CD4-positive, alpha-beta memory T cell (primary cell): ENCODE measurements at regions of chr14 and their contacts with region 1.

Region 1: DNA sequence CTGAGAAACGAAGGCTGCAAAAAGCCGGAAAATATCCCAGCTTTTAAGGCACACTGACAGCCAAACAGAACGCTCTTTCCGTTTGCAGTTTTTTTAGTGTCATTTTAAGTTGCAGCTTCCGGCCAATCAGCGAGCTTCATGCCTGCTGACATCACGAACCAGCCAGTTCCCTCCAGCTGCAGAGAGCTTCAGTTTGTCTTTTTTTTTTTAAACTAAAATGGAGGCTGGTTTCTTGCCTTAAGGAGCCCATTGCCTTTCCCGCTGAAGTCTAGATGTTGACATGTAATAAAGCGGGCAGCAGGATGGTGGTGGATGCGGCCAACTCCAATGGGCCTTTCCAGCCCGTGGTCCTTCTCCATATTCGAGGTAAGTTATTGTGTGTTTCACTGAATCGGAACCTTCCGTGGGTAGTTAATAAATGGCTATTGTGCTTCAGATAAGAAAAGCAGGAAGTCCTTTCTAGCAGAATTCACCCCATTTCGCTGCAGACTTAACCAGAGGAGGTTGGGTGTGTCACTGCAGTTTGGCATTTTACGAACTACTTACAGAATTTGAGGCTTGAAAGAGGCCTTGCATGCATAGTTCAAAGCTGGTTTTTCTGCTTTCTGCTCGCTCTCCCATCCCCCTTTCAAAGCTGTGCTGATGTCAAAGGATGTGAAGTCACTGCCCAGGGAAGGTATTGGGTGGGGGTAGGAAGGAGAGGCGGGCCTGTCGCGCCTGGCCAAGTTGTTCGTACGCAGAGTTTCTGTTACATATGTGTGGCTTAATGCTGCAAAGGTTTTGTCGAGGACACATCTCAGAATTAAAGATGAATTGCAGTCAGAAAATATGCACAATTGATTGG is 48.4 kb downstream of the PPP2R5C start:
- DNase-seq: peak; percentile 91 to 97 (median 95)
- H3K4me3 ChIP-seq: peak overlapping the region; percentile 85 to 97
- H3K4me3 Mint-ChIP-seq: peak overlapping the region; percentile 90 to 97 (median 95)
- H3K27ac ChIP-seq: peak overlapping the region; percentile 98
- H3K27ac Mint-ChIP-seq: peak overlapping the region; percentile 97 to 100 (median 99)
- H3K4me1 ChIP-seq: peaks cover 46% of the 10 kb centered on the region
- H3K4me1 Mint-ChIP-seq: peaks cover 31 to 62% (median 46%) of the 10 kb centered on the region in 4 donors
- H3K27me3 ChIP-seq: no peaks in the 10 kb centered on the region
- H3K27me3 Mint-ChIP-seq: no peaks in the 10 kb centered on the region

Region 2: GRCh38 chr14:101695659-101696058 is 114.2 kb before region 1 on chr14:
- CTCF ChIA-PET with region 1: no interaction called
- POLR2A ChIA-PET with region 1: no interaction called
- intact Hi-C with region 1: no loop called
- DNase-seq: no peak
- H3K4me3 ChIP-seq: no peak overlapping the region
- H3K4me3 Mint-ChIP-seq: no peak overlapping the region
- H3K27ac ChIP-seq: no peak overlapping the region
- H3K27ac Mint-ChIP-seq: no peak overlapping the region
- H3K4me1 ChIP-seq: no peaks in the 10 kb centered on the region
- H3K4me1 Mint-ChIP-seq: no peaks in the 10 kb centered on the region
- H3K27me3 ChIP-seq: no peaks in the 10 kb centered on the region
- H3K27me3 Mint-ChIP-seq: peaks cover 1 to 9% of the 10 kb centered on the region in 2 donors

Region 3: DNA sequence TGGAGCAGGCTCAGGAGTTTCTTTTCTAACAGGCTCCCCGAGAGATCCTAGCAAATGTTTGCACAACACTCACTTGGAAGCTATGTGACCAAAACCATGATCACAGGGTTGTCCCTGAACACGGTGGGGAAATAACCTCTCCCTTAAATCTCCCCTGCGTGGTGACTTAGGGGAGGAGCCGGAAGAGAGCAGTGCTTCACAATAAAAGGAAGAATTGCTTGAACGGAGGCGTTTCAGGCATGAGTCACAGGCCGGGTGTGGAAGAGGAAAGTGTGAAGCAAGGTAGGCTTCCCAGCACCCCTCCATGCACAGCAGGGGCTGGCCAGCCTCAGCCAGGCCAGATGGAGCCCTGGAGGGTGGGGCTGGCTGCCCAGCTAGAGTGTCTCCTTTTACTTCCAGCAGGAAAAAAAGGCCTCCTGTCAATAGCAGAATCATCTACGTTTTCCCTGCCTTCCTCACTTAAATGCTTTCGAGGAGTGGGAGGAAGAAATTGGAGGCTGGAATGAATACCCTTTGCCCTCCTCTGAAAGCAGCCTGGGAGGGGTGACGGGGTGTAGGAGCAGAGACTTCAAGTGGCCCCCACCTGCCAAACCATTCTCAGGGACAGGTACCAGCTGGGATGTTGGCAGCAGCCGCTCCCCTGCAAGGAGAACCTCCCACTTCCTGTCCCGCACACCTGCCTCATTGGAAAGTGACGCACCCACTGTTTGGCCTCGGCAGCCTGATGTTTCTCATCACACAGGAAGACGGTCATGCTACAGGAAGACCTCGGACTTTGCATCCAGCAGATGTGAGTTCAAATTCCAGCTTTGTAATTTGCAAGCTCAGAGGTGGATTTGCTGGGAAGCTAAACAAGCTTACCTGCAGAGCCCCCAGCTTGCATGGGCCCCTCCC is 78.5 kb before region 1 on chr14:
- CTCF ChIA-PET with region 1: no interaction called
- POLR2A ChIA-PET with region 1: interaction called, 18 read pairs
- intact Hi-C with region 1: no loop called
- DNase-seq: peak; percentile 83 to 96 (median 83)
- H3K4me3 ChIP-seq: peak overlapping the region; percentile 31 to 58
- H3K4me3 Mint-ChIP-seq: peak overlapping the region; percentile 68 to 86 (median 82)
- H3K27ac ChIP-seq: peak overlapping the region; percentile 75
- H3K27ac Mint-ChIP-seq: peak overlapping the region; percentile 85 to 100 (median 99)
- H3K4me1 ChIP-seq: peaks cover 35% of the 10 kb centered on the region
- H3K4me1 Mint-ChIP-seq: peaks cover 29 to 52% (median 42%) of the 10 kb centered on the region in 4 donors
- H3K27me3 ChIP-seq: no peaks in the 10 kb centered on the region
- H3K27me3 Mint-ChIP-seq: no peaks in the 10 kb centered on the region

Region 4: GRCh38 chr14:101781240-101782061 is 28.4 kb before region 1 on chr14:
- CTCF ChIA-PET with region 1: interaction called, 5 read pairs
- POLR2A ChIA-PET with region 1: interaction called, 16 read pairs
- intact Hi-C with region 1: no loop called
- DNase-seq: peak in 4 of 5 donors; percentile 26 to 41 (median 34)
- H3K4me3 ChIP-seq: peak overlapping the region; percentile 11 to 45
- H3K4me3 Mint-ChIP-seq: peak overlapping the region; percentile 67 to 86 (median 74)
- H3K27ac ChIP-seq: peak overlapping the region; percentile 8
- H3K27ac Mint-ChIP-seq: peak overlapping the region in 4 of 7 donors; percentile 25 to 83 (median 38)
- H3K4me1 ChIP-seq: peaks cover 8% of the 10 kb centered on the region
- H3K4me1 Mint-ChIP-seq: peaks cover 12 to 26% (median 21%) of the 10 kb centered on the region in 4 donors
- H3K27me3 ChIP-seq: no peaks in the 10 kb centered on the region
- H3K27me3 Mint-ChIP-seq: no peaks in the 10 kb centered on the region

Region 5: DNA sequence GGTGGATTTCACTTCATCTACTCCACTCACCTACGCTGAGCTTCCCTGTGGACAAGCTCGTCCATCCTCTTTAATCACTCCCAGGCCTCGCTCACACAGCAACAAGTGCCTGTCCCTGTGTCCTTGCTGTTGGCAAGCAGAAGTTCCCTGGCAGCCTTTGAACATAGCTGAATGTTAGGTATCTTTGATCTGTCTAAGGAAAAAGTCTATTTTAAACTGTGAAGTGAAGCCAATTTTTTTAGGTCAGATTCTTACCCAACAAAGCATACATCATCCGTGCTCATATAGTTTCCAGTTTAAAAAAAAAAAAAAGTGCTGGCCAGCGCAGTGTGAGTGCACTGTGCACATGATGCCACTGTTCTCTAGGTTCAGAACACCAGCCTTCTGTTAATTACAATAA is 12.0 kb before region 1 on chr14:
- CTCF ChIA-PET with region 1: interaction called, 8 read pairs
- POLR2A ChIA-PET with region 1: interaction called, 39 read pairs
- intact Hi-C with region 1: loop called (anchors 2 kb)
- DNase-seq: no peak
- H3K4me3 ChIP-seq: no peak overlapping the region
- H3K4me3 Mint-ChIP-seq: no peak overlapping the region
- H3K27ac ChIP-seq: no peak overlapping the region
- H3K27ac Mint-ChIP-seq: peak overlapping the region in 1 of 7 donors; percentile 22
- H3K4me1 ChIP-seq: peaks cover 2% of the 10 kb centered on the region
- H3K4me1 Mint-ChIP-seq: peaks cover 1 to 16% (median 8%) of the 10 kb centered on the region in 4 donors
- H3K27me3 ChIP-seq: no peaks in the 10 kb centered on the region
- H3K27me3 Mint-ChIP-seq: no peaks in the 10 kb centered on the region

Region 6: GRCh38 chr14:101843665-101844064 is 33.8 kb after region 1 on chr14:
- CTCF ChIA-PET with region 1: interaction called, 11 read pairs
- POLR2A ChIA-PET with region 1: interaction called, 385 read pairs
- intact Hi-C with region 1: loop called (anchors 2 kb)
- DNase-seq: peak; percentile 65 to 83 (median 67)
- H3K4me3 ChIP-seq: no peak overlapping the region
- H3K4me3 Mint-ChIP-seq: peak overlapping the region in 7 of 8 donors; percentile 23 to 81 (median 50)
- H3K27ac ChIP-seq: peak overlapping the region; percentile 7
- H3K27ac Mint-ChIP-seq: peak overlapping the region; percentile 76 to 95 (median 92)
- H3K4me1 ChIP-seq: peaks cover 96% of the 10 kb centered on the region
- H3K4me1 Mint-ChIP-seq: peaks cover 72 to 98% (median 86%) of the 10 kb centered on the region in 4 donors
- H3K27me3 ChIP-seq: no peaks in the 10 kb centered on the region
- H3K27me3 Mint-ChIP-seq: no peaks in the 10 kb centered on the region

Region 7: DNA sequence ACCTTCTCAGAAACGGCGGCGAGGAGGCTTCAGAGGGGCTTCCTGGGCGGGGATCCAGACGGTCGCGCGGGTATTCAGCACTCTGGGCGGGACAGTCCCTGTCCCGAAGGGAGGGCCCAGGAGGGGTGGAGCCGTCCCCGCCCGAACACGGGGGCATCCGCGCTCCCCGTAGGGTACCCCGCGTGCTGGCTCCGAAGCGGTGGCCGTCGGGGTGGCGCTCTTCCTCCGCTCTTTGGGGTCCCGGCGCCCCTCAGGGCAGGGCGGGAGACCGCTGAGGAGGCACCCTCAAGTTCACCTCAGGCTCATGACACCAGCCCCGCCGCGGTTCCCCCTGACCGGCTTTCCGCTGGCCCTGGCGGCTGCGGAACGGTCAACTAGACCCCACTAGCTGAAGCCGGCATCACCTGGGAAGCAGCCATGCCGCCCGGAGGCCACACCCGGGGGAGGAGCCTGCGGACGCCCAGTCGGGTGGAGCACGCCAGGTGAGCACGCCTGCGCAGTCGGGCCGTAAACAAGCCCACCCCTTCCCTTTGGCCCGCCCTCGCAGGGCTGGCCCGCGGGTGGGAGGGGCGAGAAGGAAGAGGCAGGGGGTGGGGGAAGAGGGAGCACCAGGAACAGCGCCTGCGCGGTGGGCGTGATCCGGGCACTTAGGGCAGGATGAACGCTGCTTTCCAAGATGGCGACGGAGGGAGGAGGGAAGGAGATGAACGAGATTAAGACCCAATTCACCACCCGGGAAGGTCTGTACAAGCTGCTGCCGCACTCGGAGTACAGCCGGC is 329.5 kb after region 1 on chr14 and contains the start of gene WDR20:
- CTCF ChIA-PET with region 1: no interaction called
- POLR2A ChIA-PET with region 1: no interaction called
- intact Hi-C with region 1: no loop called
- DNase-seq: peak; percentile 98 to 100 (median 100)
- H3K4me3 ChIP-seq: peak within 1 kb of the TSS; percentile 65 to 91
- H3K4me3 Mint-ChIP-seq: peak within 1 kb of the TSS; percentile 97 to 99 (median 98)
- H3K27ac ChIP-seq: peak within 1 kb of the TSS; percentile 92
- H3K27ac Mint-ChIP-seq: peak within 1 kb of the TSS; percentile 95 to 98 (median 97)
- H3K4me1 ChIP-seq: peaks cover 30% of the 10 kb centered on the region
- H3K4me1 Mint-ChIP-seq: peaks cover 19 to 25% (median 21%) of the 10 kb centered on the region in 4 donors
- H3K27me3 ChIP-seq: no peaks in the 10 kb centered on the region
- H3K27me3 Mint-ChIP-seq: no peaks in the 10 kb centered on the region
- total RNA-seq, gene WDR20: 56.8 to 57.9 TPM